ENCODE measurements at regions of chr9 and their contacts with region 1.

Region 1: GRCh38 chr9:110579034-110579861 is at the start of gene SVEP1:
- DNase-seq: peak in 1 of 2 experiments; percentile 37
- H3K4me3 ChIP-seq: peak within 1 kb of the TSS; percentile 65
- H3K27ac ChIP-seq: peak within 1 kb of the TSS; percentile 99
- H3K4me1 ChIP-seq: peaks cover 62% of the 10 kb centered on the region
- H3K27me3 ChIP-seq: no peaks in the 10 kb centered on the region
- CTCF ChIP-seq: no peak
- total RNA-seq, gene SVEP1: 2.9 and 3.3 TPM in 2 replicates

Region 2: GRCh38 chr9:110228321-110228720 is 350.9 kb before region 1 on chr9:
- CTCF ChIA-PET with region 1: interaction called, 14 read pairs
- POLR2A ChIA-PET with region 1: no interaction called
- intact Hi-C with region 1: no loop called
- DNase-seq: no peak
- H3K4me3 ChIP-seq: no peak overlapping the region
- H3K27ac ChIP-seq: no peak overlapping the region
- H3K4me1 ChIP-seq: no peaks in the 10 kb centered on the region
- H3K27me3 ChIP-seq: no peaks in the 10 kb centered on the region
- CTCF ChIP-seq: no peak

Region 3: DNA sequence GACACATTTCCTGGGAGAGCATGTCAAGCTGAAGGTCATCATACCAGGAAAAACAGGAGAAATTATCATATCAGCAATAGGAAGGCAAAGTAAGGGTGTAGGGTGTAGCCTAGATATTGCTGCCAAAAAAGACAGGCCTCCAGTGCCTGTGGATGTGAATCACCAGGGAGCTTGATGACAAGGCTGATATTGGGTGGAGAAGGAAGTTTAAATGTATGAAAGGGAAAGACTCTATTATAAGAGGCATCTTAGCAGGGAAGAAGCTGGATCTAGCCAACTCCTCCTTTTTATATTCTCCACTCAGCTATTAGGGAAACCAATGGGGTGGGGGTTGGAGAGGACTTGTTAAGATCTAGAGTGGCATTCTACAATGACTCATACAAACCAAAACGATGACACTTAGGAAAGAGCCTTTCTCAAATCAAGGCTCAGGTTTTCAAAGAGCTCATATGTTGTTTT is 228.2 kb before region 1 on chr9:
- CTCF ChIA-PET with region 1: no interaction called
- POLR2A ChIA-PET with region 1: no interaction called
- intact Hi-C with region 1: loop called (anchors 10 kb)
- DNase-seq: peak; percentile 72 to 97
- H3K4me3 ChIP-seq: no peak overlapping the region
- H3K27ac ChIP-seq: peak overlapping the region; percentile 73
- H3K4me1 ChIP-seq: peaks cover 23% of the 10 kb centered on the region
- H3K27me3 ChIP-seq: no peaks in the 10 kb centered on the region
- CTCF ChIP-seq: no peak

Region 4: GRCh38 chr9:111683392-111683791 is 1104.1 kb after region 1 on chr9:
- CTCF ChIA-PET with region 1: no interaction called
- POLR2A ChIA-PET with region 1: interaction called, 13 read pairs
- intact Hi-C with region 1: no loop called
- DNase-seq: no peak
- H3K4me3 ChIP-seq: no peak overlapping the region
- H3K27ac ChIP-seq: no peak overlapping the region
- H3K4me1 ChIP-seq: no peaks in the 10 kb centered on the region
- H3K27me3 ChIP-seq: no peaks in the 10 kb centered on the region
- CTCF ChIP-seq: no peak